ENCODE measurements at regions of chr14 and their contacts with region 1.

Region 1: GRCh38 chr14:68248481-68249255 is 429.1 kb downstream of the RAD51B start:
- DNase-seq: peak in 1 of 2 experiments; percentile 36
- H3K4me3 ChIP-seq: no peak overlapping the region
- H3K4me3 Mint-ChIP-seq: no peak overlapping the region
- H3K27ac Mint-ChIP-seq: no peak overlapping the region
- H3K4me1 ChIP-seq: peaks cover 53% of the 10 kb centered on the region
- H3K4me1 Mint-ChIP-seq: peaks cover 50% of the 10 kb centered on the region
- H3K27me3 ChIP-seq: no peaks in the 10 kb centered on the region
- H3K27me3 Mint-ChIP-seq: no peaks in the 10 kb centered on the region
- CTCF ChIP-seq: peak; percentile 30 to 42

Region 2: DNA sequence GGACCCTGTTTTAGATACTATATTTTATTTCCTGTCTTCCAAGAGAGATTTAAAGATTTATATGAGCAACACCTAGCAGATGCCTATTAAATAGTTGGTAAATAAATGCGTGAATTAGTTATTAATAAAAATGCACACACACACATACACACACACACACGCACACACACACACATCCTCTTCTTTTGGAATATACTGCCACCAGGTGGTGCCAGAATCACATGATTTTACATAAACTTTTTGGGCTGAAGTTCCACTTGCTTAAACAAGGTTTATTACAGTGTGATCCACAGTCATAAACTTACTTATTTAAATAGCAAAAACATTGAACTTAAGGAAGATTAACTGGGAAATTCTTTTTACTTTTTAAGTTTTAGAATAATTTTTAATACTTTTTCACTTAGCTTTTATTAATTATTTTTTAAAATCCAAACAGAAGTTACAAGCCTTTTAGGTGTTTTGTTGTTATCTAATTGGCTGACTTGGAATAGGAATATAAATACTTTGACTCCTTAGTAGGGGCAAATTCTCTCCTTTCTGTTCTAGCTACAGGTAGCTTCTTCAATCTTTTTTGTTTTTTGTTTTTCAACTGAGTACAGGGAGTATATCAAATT is 411.6 kb before region 1 on chr14:
- CTCF ChIA-PET with region 1: no interaction called
- POLR2A ChIA-PET with region 1: no interaction called
- intact Hi-C with region 1: loop called (anchors 5 kb)
- DNase-seq: peak in 1 of 2 experiments; percentile 73
- H3K4me3 ChIP-seq: no peak overlapping the region
- H3K4me3 Mint-ChIP-seq: no peak overlapping the region
- H3K27ac Mint-ChIP-seq: no peak overlapping the region
- H3K4me1 ChIP-seq: no peaks in the 10 kb centered on the region
- H3K4me1 Mint-ChIP-seq: no peaks in the 10 kb centered on the region
- H3K27me3 ChIP-seq: no peaks in the 10 kb centered on the region
- H3K27me3 Mint-ChIP-seq: no peaks in the 10 kb centered on the region
- CTCF ChIP-seq: peak; percentile 56 to 57

Region 3: DNA sequence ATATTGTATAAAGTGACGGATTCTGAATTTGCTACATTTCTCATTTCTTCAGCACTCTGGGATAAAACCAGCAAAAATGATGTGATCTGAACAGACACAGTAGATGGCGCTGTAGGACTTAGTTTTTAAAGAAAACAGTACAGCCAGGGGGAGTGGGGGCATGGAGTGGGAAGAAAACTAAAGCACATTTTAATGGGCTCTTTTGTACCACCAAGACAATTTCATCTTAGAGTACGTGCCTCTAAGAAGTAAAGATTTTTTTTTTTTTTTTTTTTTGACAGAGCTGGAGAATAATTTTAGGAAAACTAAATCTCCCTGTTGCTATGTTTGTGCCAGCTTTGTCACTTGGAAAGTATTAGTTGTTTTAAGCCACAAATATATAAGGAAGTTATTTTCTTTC is 304.7 kb before region 1 on chr14:
- CTCF ChIA-PET with region 1: interaction called, 3 read pairs
- POLR2A ChIA-PET with region 1: no interaction called
- intact Hi-C with region 1: loop called (anchors 2 kb)
- DNase-seq: peak; percentile 74 to 75
- H3K4me3 ChIP-seq: no peak overlapping the region
- H3K4me3 Mint-ChIP-seq: no peak overlapping the region
- H3K27ac Mint-ChIP-seq: no peak overlapping the region
- H3K4me1 ChIP-seq: peaks cover 23% of the 10 kb centered on the region
- H3K4me1 Mint-ChIP-seq: peaks cover 27% of the 10 kb centered on the region
- H3K27me3 ChIP-seq: no peaks in the 10 kb centered on the region
- H3K27me3 Mint-ChIP-seq: no peaks in the 10 kb centered on the region
- CTCF ChIP-seq: peak; percentile 62 to 77

Region 4: DNA sequence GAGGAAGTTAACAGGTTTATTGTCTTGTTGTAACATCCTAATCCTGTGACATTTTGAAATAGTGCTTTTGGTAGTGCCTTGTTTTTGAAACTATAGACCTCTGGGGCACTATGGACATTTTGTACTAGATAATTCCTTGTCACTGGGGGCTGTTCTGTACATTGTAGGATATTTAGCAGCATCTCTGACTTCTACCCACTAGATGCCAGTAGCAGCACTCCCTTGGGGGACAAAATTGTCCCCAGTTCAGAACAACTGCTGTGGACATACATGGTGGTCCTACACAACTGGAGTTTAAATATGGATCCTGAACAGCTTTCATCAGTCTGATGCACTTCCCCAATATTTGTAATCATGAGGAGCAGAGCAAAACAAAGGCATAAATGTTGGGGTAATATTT is 164.4 kb before region 1 on chr14:
- CTCF ChIA-PET with region 1: no interaction called
- POLR2A ChIA-PET with region 1: no interaction called
- intact Hi-C with region 1: loop called (anchors 10 kb)
- DNase-seq: no peak
- H3K4me3 ChIP-seq: no peak overlapping the region
- H3K4me3 Mint-ChIP-seq: no peak overlapping the region
- H3K27ac Mint-ChIP-seq: no peak overlapping the region
- H3K4me1 ChIP-seq: peaks cover 12% of the 10 kb centered on the region
- H3K4me1 Mint-ChIP-seq: no peaks in the 10 kb centered on the region
- H3K27me3 ChIP-seq: no peaks in the 10 kb centered on the region
- H3K27me3 Mint-ChIP-seq: no peaks in the 10 kb centered on the region
- CTCF ChIP-seq: peak in 1 of 2 experiments; percentile 18

Region 5: DNA sequence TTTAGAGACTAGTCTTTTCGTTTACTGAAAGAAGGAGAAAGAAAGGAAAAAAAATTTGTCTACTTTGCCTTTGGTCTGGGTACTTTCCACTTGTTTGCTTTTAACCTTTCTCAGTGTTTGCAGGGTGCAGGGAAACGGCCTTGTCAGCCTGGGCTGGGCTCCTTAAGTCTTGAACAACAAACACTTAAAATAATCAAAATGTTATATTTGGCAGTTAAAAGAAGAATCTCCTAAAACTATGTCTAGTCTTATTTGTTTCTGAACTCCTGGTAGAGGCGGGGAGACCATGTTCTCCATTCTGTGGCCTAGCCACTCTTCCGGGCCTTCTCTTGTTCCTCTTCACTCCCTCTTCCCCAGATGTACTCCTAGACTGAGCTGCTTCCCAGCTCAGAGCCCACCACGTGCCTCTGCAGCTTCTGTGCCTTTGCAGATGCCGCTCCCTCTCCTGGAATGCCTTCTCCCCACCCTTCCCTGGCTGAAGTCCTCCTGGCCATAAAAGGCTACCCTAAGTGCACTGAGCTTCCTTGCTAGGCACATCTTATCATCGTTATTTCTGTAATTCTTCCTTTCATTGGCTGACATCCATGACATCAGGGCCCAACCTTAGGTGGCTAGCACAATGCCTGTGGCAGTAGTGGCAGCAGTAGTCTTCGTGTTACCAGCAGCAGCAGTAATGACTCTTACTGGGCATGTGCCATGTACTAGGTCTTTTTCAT is 111.3 kb after region 1 on chr14:
- CTCF ChIA-PET with region 1: no interaction called
- POLR2A ChIA-PET with region 1: no interaction called
- intact Hi-C with region 1: loop called (anchors 5 kb)
- DNase-seq: peak; percentile 55 to 87
- H3K4me3 ChIP-seq: no peak overlapping the region
- H3K4me3 Mint-ChIP-seq: peak overlapping the region; percentile 29
- H3K27ac Mint-ChIP-seq: peak overlapping the region; percentile 92
- H3K4me1 ChIP-seq: peaks cover 26% of the 10 kb centered on the region
- H3K4me1 Mint-ChIP-seq: peaks cover 34% of the 10 kb centered on the region
- H3K27me3 ChIP-seq: no peaks in the 10 kb centered on the region
- H3K27me3 Mint-ChIP-seq: no peaks in the 10 kb centered on the region
- CTCF ChIP-seq: no peak

Region 6: DNA sequence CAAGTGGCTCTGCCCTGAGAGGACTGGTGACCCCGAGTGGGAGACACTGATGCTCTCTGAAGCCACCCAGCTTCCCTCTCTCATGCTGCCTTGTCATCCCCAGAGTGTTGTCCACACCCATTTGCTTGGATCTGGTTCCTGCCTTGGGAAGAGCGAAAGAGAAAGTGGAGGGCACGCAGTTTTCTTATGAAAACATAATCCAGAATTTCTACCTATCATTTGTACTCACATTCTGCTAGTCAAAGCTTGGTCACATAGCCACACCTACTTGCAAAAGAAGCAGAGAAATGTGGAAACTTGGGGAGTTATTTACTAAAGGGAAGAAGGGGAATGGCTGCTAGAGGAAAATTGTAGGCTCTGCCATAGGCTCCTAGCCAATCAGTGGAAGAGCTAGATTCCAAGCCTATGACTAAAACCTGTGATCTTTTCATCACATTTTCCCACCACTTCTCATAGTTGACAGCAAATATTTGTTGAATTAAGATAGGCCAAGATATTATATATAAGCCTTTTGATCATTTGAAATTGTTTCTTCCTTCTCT is 217.9 kb after region 1 on chr14:
- CTCF ChIA-PET with region 1: no interaction called
- POLR2A ChIA-PET with region 1: no interaction called
- intact Hi-C with region 1: loop called (anchors 2 kb)
- DNase-seq: peak; percentile 45 to 56
- H3K4me3 ChIP-seq: no peak overlapping the region
- H3K4me3 Mint-ChIP-seq: no peak overlapping the region
- H3K27ac Mint-ChIP-seq: peak overlapping the region; percentile 48
- H3K4me1 ChIP-seq: peaks cover 59% of the 10 kb centered on the region
- H3K4me1 Mint-ChIP-seq: peaks cover 52% of the 10 kb centered on the region
- H3K27me3 ChIP-seq: no peaks in the 10 kb centered on the region
- H3K27me3 Mint-ChIP-seq: no peaks in the 10 kb centered on the region
- CTCF ChIP-seq: no peak

Region 7: GRCh38 chr14:68655911-68656360 is 407.3 kb after region 1 on chr14:
- CTCF ChIA-PET with region 1: interaction called, 4 read pairs
- POLR2A ChIA-PET with region 1: no interaction called
- intact Hi-C with region 1: loop called (anchors 5 kb)
- DNase-seq: peak; percentile 48 to 50
- H3K4me3 ChIP-seq: no peak overlapping the region
- H3K4me3 Mint-ChIP-seq: no peak overlapping the region
- H3K27ac Mint-ChIP-seq: no peak overlapping the region
- H3K4me1 ChIP-seq: peaks cover 36% of the 10 kb centered on the region
- H3K4me1 Mint-ChIP-seq: peaks cover 19% of the 10 kb centered on the region
- H3K27me3 ChIP-seq: no peaks in the 10 kb centered on the region
- H3K27me3 Mint-ChIP-seq: no peaks in the 10 kb centered on the region
- CTCF ChIP-seq: peak in 1 of 2 experiments; percentile 36

Measured in Caco-2 (cell line).